Activated naive CD4-positive, alpha-beta T cell treated with anti-CD3 and anti-CD28 coated beads for 36 hours (primary cell): ENCODE measurements at regions of chr15 and their contacts with region 1.

Region 1: DNA sequence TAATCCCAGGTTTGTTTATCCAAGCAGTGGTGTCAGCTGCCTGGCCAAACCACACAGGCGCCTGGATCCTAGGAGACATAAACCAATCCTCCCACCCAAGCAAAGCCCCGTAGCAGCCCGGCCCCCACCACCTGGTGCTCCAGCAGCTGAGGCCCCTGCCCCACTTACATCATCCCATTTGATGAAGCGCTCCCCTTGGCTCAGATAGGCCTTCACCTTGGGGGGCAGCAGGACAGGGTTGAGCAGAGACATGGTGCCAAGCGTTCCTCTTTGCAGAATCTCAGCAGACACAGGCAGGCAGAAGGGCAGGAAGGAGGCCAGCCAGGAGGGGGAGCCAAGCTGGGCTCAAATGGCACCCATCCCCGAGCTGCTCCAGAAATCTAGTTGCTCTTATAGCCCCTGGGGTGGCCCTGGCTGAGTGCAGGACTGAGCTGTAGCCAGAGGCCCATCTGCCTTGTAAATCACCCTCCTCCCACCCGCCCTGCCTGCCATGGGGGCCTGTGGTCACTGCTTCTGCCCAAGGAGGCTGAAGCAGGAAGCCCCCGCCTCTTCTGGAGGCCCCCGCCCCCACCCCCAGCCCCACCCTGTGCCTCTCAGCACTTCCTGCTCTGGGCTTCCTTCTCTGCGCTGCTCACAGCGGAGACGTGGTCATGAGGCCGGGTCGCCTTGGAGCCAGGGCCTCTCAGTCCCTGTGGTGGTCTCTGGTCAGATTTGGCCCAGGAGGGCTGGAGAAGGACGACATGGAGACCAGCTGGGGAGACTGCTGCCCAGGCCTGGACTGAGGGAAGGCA is at the start of gene PLCB2:
- DNase-seq: peak; percentile 77
- H3K4me3 Mint-ChIP-seq: peak within 1 kb of the TSS; percentile 97
- H3K27ac Mint-ChIP-seq: peak within 1 kb of the TSS; percentile 96
- H3K4me1 Mint-ChIP-seq: peaks cover 29% of the 10 kb centered on the region
- H3K27me3 Mint-ChIP-seq: no peaks in the 10 kb centered on the region
- total RNA-seq, gene PLCB2: 55.0 to 56.7 TPM

Region 2: DNA sequence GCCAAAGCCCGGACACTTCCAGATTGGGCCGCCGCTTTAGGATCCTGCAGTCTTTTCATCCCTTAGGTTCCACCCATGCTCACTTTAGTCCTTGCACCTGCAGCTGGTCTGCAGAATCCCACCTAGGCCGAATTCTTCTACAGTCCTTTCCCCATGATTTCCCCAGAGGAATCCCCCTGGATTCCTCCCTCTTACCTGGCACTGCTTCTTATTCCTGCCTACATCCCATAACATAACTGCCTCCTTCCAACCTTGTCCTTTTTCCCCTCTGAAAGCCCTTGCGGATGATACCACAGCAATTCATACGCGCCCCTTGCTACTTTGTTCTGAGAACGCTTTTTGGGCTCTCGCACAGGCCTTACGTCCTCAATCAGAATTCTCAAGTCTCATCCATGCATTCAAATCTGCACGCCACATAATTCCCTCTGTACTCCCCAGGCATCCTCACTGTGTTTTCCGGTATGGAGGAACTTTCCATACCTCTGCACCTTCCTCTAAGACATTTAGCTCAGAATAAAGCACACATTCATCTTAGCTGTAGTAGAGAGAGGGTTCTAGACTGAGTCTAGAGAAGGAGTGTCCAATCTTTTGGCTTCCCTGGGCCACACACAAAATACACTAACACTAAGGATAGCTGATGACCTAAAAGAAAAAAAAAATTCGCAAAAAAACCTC is 373.1 kb before region 1 on chr15:
- CTCF ChIA-PET with region 1: no interaction called
- intact Hi-C with region 1: no loop called
- DNase-seq: peak; percentile 8
- H3K4me3 Mint-ChIP-seq: peak overlapping the region; percentile 89
- H3K27ac Mint-ChIP-seq: peak overlapping the region; percentile 52
- H3K4me1 Mint-ChIP-seq: peaks cover 27% of the 10 kb centered on the region
- H3K27me3 Mint-ChIP-seq: no peaks in the 10 kb centered on the region

Region 3: DNA sequence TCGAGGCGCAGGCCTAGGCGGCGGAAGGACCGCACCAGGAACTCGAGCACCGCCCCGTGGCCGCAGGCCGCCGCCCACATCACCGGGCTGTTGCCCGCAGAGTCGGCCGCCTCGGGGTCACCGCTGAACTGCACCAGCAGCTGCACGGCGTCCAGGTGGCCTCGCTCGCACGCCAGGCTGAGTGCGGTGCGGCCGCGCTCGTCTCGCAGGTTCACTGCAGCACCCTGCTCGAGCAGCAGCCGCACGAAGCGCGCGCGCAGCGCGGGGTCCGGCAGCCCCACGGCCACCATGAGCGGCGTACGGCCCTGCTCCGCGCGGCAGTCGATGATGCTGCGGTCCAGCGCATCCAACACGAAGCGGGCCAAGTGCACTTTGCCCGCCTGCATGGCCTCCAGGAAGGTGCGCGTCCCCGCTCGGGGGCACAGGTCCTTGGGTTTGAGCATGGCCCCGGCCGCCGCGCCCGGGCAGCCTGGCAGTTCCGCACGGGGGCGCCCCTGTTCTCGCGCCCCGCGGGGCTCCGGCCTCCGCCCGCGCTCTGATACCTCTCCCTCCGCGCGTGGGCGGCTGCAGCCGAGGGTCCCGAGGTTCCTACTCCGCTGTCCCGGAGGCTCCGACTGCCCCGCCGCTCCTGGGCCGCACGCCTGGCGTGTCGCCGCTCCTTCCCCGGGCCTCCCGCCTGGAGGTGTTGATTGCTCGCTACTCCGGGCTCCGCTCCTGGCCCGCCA is 25.3 kb before region 1 on chr15:
- CTCF ChIA-PET with region 1: interaction called, 365 read pairs
- intact Hi-C with region 1: loop called (anchors 1 kb)
- DNase-seq: peak; percentile 38
- H3K4me3 Mint-ChIP-seq: peak overlapping the region; percentile 62
- H3K27ac Mint-ChIP-seq: no peak overlapping the region
- H3K4me1 Mint-ChIP-seq: peaks cover 5% of the 10 kb centered on the region
- H3K27me3 Mint-ChIP-seq: peaks cover 28% of the 10 kb centered on the region

Region 4: GRCh38 chr15:40290918-40291574 is 16.6 kb before region 1 on chr15:
- CTCF ChIA-PET with region 1: interaction called, 40 read pairs
- intact Hi-C with region 1: no loop called
- DNase-seq: no peak
- H3K4me3 Mint-ChIP-seq: no peak overlapping the region
- H3K27ac Mint-ChIP-seq: no peak overlapping the region
- H3K4me1 Mint-ChIP-seq: no peaks in the 10 kb centered on the region
- H3K27me3 Mint-ChIP-seq: no peaks in the 10 kb centered on the region

Region 5: DNA sequence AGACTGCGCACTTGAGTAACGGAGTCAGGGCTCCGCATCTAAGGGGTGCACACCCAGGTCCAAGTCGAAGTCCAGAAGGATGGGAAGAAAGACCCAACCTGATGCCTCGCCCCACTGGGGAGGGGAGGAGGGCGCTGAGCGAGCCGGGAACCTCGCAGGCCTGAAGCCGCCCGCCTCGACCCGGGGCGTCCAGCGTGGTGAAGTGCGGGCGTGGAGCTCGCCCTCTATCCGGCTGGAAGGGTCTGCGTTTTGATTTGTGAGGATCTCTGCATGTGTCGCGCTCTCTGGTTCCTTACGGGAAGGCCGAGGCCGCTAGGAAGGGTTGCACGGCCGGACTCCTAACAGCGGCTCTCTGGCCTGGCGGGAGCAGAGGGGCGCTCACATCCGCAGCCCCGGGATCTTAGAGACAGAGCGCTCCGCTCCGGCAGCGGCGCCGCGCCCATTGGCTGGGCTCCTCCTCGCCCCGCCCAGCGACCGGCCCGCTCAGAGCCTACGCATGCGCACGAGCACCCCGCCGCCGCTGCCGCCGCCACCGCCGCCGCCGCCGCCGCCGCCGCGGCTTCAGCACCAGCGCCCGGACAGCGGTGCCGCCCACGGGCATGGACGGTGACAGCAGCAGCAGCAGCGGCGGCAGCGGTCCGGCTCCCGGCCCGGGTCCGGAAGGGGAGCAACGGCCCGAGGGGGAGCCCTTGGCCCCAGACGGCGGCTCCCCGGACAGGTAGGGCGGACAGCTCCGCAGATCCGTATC is 50.3 kb after region 1 on chr15 and contains the start of gene DISP2:
- CTCF ChIA-PET with region 1: interaction called, 6 read pairs
- intact Hi-C with region 1: loop called (anchors 5 kb)
- DNase-seq: peak; percentile 90
- H3K4me3 Mint-ChIP-seq: peak within 1 kb of the TSS; percentile 72
- H3K27ac Mint-ChIP-seq: no peak within 1 kb of the TSS
- H3K4me1 Mint-ChIP-seq: peaks cover 2% of the 10 kb centered on the region
- H3K27me3 Mint-ChIP-seq: peaks cover 5% of the 10 kb centered on the region
- total RNA-seq, gene DISP2: 0.02 TPM in 1 of 2 experiments, not detected in the other

Region 6: DNA sequence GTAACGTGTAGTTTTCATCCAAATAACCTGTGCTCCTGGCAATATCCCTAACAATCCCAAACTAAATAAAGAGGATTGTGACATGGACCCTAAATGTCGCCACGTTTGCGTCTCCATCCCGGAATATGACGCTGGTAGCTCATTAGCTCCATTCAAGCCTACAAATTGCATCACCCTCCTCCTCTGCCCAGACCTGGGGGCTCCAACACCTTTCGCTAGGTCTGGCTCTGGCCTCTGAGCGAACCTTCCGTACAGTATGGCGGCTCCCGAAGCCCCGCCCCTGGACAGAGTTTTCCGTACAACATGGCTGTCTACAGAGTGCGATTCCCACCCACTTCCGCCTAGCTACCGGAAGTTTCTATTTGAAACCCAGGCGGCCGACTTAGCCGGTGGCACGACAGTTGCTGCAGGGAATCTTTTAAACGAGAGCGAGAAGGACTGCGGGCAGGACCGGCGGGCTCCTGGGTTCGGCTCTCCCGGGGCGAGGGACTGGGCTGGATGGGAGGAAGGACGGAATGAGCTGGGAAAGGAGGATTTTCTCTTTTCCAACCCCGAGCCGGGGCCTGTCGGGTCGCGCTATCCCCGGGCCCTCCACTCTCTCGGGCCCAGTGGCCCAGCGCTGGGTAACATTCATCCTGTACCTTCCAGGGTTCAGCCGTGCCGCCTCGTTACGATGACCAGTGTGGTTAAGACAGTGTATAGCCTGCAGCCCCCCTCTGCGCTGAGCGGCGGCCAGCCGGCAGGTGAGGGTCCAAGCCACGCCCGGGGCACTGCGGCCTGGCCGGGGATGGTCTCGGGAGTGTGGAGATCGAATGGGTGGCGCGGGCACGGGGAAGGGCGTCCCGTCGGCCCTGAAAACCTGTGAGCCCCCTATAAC is 75.2 kb after region 1 on chr15 and contains the start of gene KNSTRN:
- CTCF ChIA-PET with region 1: no interaction called
- intact Hi-C with region 1: loop called (anchors 1 kb)
- DNase-seq: peak; percentile 97
- H3K4me3 Mint-ChIP-seq: peak within 1 kb of the TSS; percentile 94
- H3K27ac Mint-ChIP-seq: peak within 1 kb of the TSS; percentile 72
- H3K4me1 Mint-ChIP-seq: peaks cover 18% of the 10 kb centered on the region
- H3K27me3 Mint-ChIP-seq: no peaks in the 10 kb centered on the region
- total RNA-seq, gene KNSTRN: 60.7 to 62.1 TPM

Region 7: DNA sequence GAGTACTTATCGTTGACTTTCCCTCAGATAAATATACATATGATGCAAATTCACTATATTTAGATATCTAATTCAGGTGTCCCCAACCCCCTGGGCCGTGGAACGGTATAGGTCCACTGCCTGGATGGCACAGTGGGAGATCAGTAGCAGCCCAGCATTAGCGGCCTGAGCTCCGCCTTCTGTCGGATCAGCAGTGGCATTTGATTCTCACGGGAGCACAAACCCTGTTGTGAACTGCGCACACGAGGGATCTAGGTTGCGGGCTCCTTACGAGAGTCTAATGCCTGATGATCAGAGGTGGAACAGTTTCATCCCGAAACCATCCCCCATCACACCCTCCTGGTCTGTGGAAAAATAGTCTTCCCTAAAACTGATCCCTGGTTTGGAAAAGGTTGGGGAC is 293.3 kb after region 1 on chr15:
- CTCF ChIA-PET with region 1: no interaction called
- intact Hi-C with region 1: no loop called
- DNase-seq: no peak
- H3K4me3 Mint-ChIP-seq: no peak overlapping the region
- H3K27ac Mint-ChIP-seq: no peak overlapping the region
- H3K4me1 Mint-ChIP-seq: no peaks in the 10 kb centered on the region
- H3K27me3 Mint-ChIP-seq: no peaks in the 10 kb centered on the region